ENCODE measurements at regions of chr12 and their contacts with region 1.

Region 1: GRCh38 chr12:53180220-53180930 is at the starts of genes CSAD and ZNF740:
- DNase-seq: peak; percentile 98
- ATAC-seq: peak; percentile 93
- H3K4me3 ChIP-seq: peak within 1 kb of the TSS; percentile 81 to 92 (median 86)
- H3K4me3 Mint-ChIP-seq: peak within 1 kb of the TSS; percentile 95
- H3K27ac ChIP-seq: peak within 1 kb of the TSS; percentile 87 to 89
- H3K27ac Mint-ChIP-seq: peak within 1 kb of the TSS; percentile 95
- H3K4me1 ChIP-seq: peaks cover 28 to 38% of the 10 kb centered on the region in 2 donors
- H3K4me1 Mint-ChIP-seq: peaks cover 52% of the 10 kb centered on the region
- H3K27me3 ChIP-seq: no peaks in the 10 kb centered on the region
- H3K27me3 Mint-ChIP-seq: no peaks in the 10 kb centered on the region
- CTCF ChIP-seq: no peak
- total RNA-seq, gene CSAD: 56.3 and 57.0 TPM in 2 replicates
- total RNA-seq, gene ZNF740: 117 and 131 TPM in 2 replicates

Region 2: DNA sequence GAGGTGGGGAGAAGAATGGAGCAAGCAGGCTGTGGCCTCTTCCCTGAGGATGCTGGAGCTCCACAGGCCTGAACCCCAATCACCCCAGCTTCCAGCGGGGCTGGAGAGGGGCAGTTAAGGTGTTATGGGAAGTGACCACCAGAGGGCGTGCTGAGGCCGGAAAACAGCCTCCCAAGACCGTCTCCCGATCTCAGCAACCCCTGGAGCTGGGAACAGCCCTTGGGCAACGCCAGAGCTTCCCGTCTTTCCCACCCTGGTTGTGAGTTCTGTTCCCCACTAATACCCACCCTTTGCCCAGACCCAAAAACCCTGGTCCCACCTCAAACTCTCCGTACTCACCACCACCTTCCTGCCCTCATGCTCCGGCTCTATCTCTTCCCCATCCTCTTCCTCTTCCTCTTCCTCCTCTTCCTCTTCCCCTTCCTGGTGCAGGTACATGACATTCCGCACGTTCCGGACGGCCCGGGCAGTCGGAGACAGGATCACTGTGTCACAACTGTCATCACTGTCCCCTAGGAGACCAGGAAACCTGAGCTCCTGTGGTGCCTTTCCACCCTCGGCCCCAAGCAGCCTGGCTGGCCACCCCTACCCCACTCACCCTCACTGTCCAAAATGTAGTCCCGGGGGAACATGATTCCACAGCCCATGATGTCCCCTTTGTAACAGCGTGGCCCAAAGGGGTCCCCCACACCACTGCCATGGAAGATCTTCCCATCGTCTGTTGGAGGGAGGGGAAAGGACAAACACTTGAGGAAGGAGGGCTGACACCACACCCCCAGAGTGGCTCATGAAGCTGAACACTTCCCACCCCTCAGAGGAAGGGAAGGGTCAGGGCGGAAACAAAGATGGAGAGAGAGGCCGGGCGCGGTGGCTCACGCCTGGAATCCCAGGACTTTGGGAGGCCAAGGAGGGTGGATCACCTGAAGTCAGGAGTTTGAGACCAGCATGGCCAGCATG is 114.1 kb before region 1 on chr12:
- CTCF ChIA-PET with region 1: interaction called, 11 read pairs
- POLR2A ChIA-PET with region 1: no interaction called
- intact Hi-C with region 1: no loop called
- DNase-seq: peak; percentile 77
- ATAC-seq: peak; percentile 75
- H3K4me3 ChIP-seq: no peak overlapping the region
- H3K4me3 Mint-ChIP-seq: no peak overlapping the region
- H3K27ac ChIP-seq: no peak overlapping the region
- H3K27ac Mint-ChIP-seq: peak overlapping the region; percentile 26
- H3K4me1 ChIP-seq: peaks cover 0 to 2% of the 10 kb centered on the region in 2 donors
- H3K4me1 Mint-ChIP-seq: peaks cover 5% of the 10 kb centered on the region
- H3K27me3 ChIP-seq: no peaks in the 10 kb centered on the region
- H3K27me3 Mint-ChIP-seq: no peaks in the 10 kb centered on the region
- CTCF ChIP-seq: peak; percentile 87

Region 3: GRCh38 chr12:53133722-53134121 is 46.7 kb before region 1 on chr12:
- CTCF ChIA-PET with region 1: no interaction called
- POLR2A ChIA-PET with region 1: no interaction called
- intact Hi-C with region 1: no loop called
- DNase-seq: no peak
- ATAC-seq: no peak
- H3K4me3 ChIP-seq: no peak overlapping the region
- H3K4me3 Mint-ChIP-seq: no peak overlapping the region
- H3K27ac ChIP-seq: no peak overlapping the region
- H3K27ac Mint-ChIP-seq: no peak overlapping the region
- H3K4me1 ChIP-seq: no peaks in the 10 kb centered on the region
- H3K4me1 Mint-ChIP-seq: no peaks in the 10 kb centered on the region
- H3K27me3 ChIP-seq: peaks cover 0 to 5% (median 0%) of the 10 kb centered on the region in 4 experiments
- H3K27me3 Mint-ChIP-seq: peaks cover 18% of the 10 kb centered on the region
- CTCF ChIP-seq: no peak

Region 4: GRCh38 chr12:53200458-53201176 is 20.2 kb after region 1 on chr12:
- CTCF ChIA-PET with region 1: interaction called, 44 read pairs
- POLR2A ChIA-PET with region 1: interaction called, 7 read pairs
- intact Hi-C with region 1: loop called (anchors 2 kb)
- DNase-seq: peak; percentile 71
- ATAC-seq: peak; percentile 59
- H3K4me3 ChIP-seq: peak overlapping the region in 3 of 5 experiments; percentile 17 to 54 (median 23)
- H3K4me3 Mint-ChIP-seq: peak overlapping the region; percentile 70
- H3K27ac ChIP-seq: peak overlapping the region; percentile 39 to 58
- H3K27ac Mint-ChIP-seq: peak overlapping the region; percentile 80
- H3K4me1 ChIP-seq: peaks cover 79 to 86% of the 10 kb centered on the region in 2 donors
- H3K4me1 Mint-ChIP-seq: peaks cover 68% of the 10 kb centered on the region
- H3K27me3 ChIP-seq: no peaks in the 10 kb centered on the region
- H3K27me3 Mint-ChIP-seq: no peaks in the 10 kb centered on the region
- CTCF ChIP-seq: no peak

Region 5: DNA sequence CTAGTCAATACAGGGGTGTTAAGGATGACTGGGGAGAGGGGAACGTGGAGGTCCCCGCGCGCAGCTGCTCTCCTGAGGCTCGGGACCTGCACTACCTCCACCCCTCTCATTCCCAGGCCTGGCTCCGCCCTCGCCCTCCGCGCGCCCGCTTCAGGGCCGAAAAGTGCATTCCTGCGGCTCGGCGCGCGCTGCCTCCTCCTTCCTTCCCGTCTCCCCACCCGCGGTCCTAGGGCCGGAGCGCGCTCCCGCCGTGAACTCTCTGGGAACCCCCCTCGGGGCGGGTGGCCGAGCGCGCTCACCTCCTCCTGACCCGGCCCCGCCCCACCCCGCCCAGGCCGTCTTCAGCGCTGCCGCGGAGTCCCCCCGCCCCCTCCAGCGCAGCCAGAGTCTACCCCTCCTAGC is 40.4 kb after region 1 on chr12:
- CTCF ChIA-PET with region 1: interaction called, 8 read pairs
- POLR2A ChIA-PET with region 1: interaction called, 24 read pairs
- intact Hi-C with region 1: loop called (anchors 1 kb)
- DNase-seq: peak; percentile 92
- ATAC-seq: peak; percentile 76
- H3K4me3 ChIP-seq: peak overlapping the region; percentile 63 to 100 (median 90)
- H3K4me3 Mint-ChIP-seq: peak overlapping the region; percentile 97
- H3K27ac ChIP-seq: peak overlapping the region; percentile 93 to 95
- H3K27ac Mint-ChIP-seq: peak overlapping the region; percentile 98
- H3K4me1 ChIP-seq: peaks cover 39 to 56% of the 10 kb centered on the region in 2 donors
- H3K4me1 Mint-ChIP-seq: peaks cover 53% of the 10 kb centered on the region
- H3K27me3 ChIP-seq: no peaks in the 10 kb centered on the region
- H3K27me3 Mint-ChIP-seq: no peaks in the 10 kb centered on the region
- CTCF ChIP-seq: no peak

Region 6: DNA sequence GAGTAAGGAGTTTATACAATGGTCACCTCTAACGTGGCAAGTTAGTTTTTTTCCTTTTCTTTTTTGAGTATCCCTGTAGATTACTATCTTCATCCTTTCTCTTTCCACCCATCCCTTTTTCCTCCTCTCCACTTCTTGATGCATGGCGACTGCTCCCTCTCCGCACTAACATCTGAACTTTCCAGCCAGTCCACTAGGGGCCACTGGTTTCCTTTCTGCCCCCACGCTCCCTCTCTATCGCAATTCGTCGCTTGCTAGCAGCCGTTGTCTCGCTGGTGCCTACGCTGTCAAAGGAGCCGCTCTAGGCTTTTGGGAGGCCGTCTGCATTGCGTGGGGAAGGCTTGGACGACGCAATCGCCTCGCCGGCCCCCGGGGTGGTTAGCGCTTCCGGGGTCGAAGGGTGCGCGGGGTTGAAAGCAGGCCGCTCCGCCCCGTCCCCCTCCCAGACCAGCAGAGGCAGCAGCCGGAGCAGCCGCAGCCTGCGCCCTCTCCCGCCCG is 271.3 kb after region 1 on chr12 and contains the start of gene PCBP2:
- CTCF ChIA-PET with region 1: no interaction called
- POLR2A ChIA-PET with region 1: no interaction called
- intact Hi-C with region 1: loop called (anchors 5 kb)
- DNase-seq: peak; percentile 98
- ATAC-seq: peak; percentile 90
- H3K4me3 ChIP-seq: peak within 1 kb of the TSS; percentile 67 to 92 (median 85)
- H3K4me3 Mint-ChIP-seq: peak within 1 kb of the TSS; percentile 97
- H3K27ac ChIP-seq: peak within 1 kb of the TSS; percentile 90 to 94
- H3K27ac Mint-ChIP-seq: peak within 1 kb of the TSS; percentile 99
- H3K4me1 ChIP-seq: peaks cover 15 to 20% of the 10 kb centered on the region in 2 donors
- H3K4me1 Mint-ChIP-seq: peaks cover 27% of the 10 kb centered on the region
- H3K27me3 ChIP-seq: no peaks in the 10 kb centered on the region
- H3K27me3 Mint-ChIP-seq: no peaks in the 10 kb centered on the region
- CTCF ChIP-seq: peak; percentile 84
- total RNA-seq, gene PCBP2: 916 and 944 TPM in 2 replicates